Activated CD4-positive, alpha-beta T cell treated with anti-CD3 and anti-CD28 coated beads for 36 hours (primary cell): ENCODE measurements at regions of chrX and their contacts with region 1.

Region 1: GRCh38 chrX:51461053-51462044 is 35.0 kb downstream of the NUDT11 start:
- DNase-seq: peak; percentile 7
- ATAC-seq: no peak
- H3K4me3 Mint-ChIP-seq: no peak overlapping the region
- H3K27ac Mint-ChIP-seq: no peak overlapping the region
- H3K4me1 Mint-ChIP-seq: no peaks in the 10 kb centered on the region
- H3K27me3 Mint-ChIP-seq: no peaks in the 10 kb centered on the region

Region 2: GRCh38 chrX:50691820-50692219 is 769.5 kb before region 1 on chrX:
- CTCF ChIA-PET with region 1: interaction called, 3 read pairs
- POLR2A ChIA-PET with region 1: no interaction called
- intact Hi-C with region 1: loop called in 1 of 2 experiments (anchors 10 kb)
- DNase-seq: peak; percentile 4
- ATAC-seq: peak; percentile 60
- H3K4me3 Mint-ChIP-seq: no peak overlapping the region
- H3K27ac Mint-ChIP-seq: no peak overlapping the region
- H3K4me1 Mint-ChIP-seq: no peaks in the 10 kb centered on the region
- H3K27me3 Mint-ChIP-seq: peaks cover 6% of the 10 kb centered on the region

Region 3: GRCh38 chrX:51144852-51145442 is 316.4 kb before region 1 on chrX:
- CTCF ChIA-PET with region 1: interaction called, 9 read pairs
- POLR2A ChIA-PET with region 1: no interaction called
- intact Hi-C with region 1: loop called (anchors 2 to 5 kb)
- DNase-seq: peak; percentile 50
- ATAC-seq: no peak
- H3K4me3 Mint-ChIP-seq: no peak overlapping the region
- H3K27ac Mint-ChIP-seq: no peak overlapping the region
- H3K4me1 Mint-ChIP-seq: no peaks in the 10 kb centered on the region
- H3K27me3 Mint-ChIP-seq: peaks cover 13% of the 10 kb centered on the region

Region 4: DNA sequence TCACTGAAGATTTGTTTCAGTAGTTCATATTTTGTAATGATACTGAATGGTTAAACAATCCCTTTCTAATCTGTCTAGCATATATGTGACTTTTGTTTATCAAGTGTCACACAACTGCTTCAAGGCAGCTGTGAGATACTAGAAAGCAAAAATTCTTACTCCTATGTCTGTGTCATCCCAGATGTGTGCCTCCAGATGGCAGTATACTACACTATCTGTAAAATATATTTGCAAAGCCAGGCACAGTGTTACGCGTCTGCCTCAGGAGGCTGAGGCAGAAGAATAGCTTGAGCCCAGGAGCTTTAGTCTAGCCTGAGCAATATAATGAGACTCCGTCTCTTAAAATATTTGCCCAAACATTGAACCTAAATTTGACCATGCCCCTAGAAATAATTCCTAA is 124.8 kb before region 1 on chrX:
- CTCF ChIA-PET with region 1: interaction called, 46 read pairs
- POLR2A ChIA-PET with region 1: no interaction called
- intact Hi-C with region 1: loop called (anchors 1 to 2 kb)
- DNase-seq: peak; percentile 39
- ATAC-seq: peak; percentile 58
- H3K4me3 Mint-ChIP-seq: no peak overlapping the region
- H3K27ac Mint-ChIP-seq: no peak overlapping the region
- H3K4me1 Mint-ChIP-seq: peaks cover 1% of the 10 kb centered on the region
- H3K27me3 Mint-ChIP-seq: peaks cover 3% of the 10 kb centered on the region

Region 5: GRCh38 chrX:51420610-51421009 is 40.7 kb before region 1 on chrX:
- CTCF ChIA-PET with region 1: interaction called, 24 read pairs
- POLR2A ChIA-PET with region 1: no interaction called
- intact Hi-C with region 1: no loop called
- DNase-seq: peak; percentile 30
- ATAC-seq: peak; percentile 49
- H3K4me3 Mint-ChIP-seq: no peak overlapping the region
- H3K27ac Mint-ChIP-seq: no peak overlapping the region
- H3K4me1 Mint-ChIP-seq: peaks cover 9% of the 10 kb centered on the region
- H3K27me3 Mint-ChIP-seq: no peaks in the 10 kb centered on the region

Region 6: DNA sequence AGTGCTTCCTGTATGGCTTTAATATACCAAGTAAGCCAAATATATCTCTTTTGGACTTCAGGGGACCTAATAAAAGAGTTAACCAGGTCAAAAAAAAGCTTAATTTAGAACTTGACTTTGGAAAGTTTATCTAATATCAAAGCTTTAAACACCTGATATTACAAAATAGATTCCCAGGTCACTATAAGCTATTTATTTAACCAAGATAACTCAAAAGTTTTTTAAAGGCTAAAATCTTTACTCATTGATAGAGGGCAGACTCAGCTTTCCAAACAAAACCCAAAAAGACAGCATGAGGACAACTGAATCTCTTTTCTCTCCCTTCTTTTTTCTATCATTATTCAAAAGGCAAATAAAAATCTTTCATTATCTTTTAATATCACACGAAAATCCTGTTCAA is 15.6 kb after region 1 on chrX:
- CTCF ChIA-PET with region 1: interaction called, 13 read pairs
- POLR2A ChIA-PET with region 1: no interaction called
- intact Hi-C with region 1: no loop called
- DNase-seq: no peak
- ATAC-seq: no peak
- H3K4me3 Mint-ChIP-seq: no peak overlapping the region
- H3K27ac Mint-ChIP-seq: no peak overlapping the region
- H3K4me1 Mint-ChIP-seq: no peaks in the 10 kb centered on the region
- H3K27me3 Mint-ChIP-seq: no peaks in the 10 kb centered on the region

Region 7: GRCh38 chrX:51955200-51955599 is 493.9 kb after region 1 on chrX:
- CTCF ChIA-PET with region 1: no interaction called
- POLR2A ChIA-PET with region 1: no interaction called
- intact Hi-C with region 1: no loop called
- DNase-seq: peak; percentile 5
- ATAC-seq: peak; percentile 76
- H3K4me3 Mint-ChIP-seq: no peak overlapping the region
- H3K27ac Mint-ChIP-seq: no peak overlapping the region
- H3K4me1 Mint-ChIP-seq: peaks cover 2% of the 10 kb centered on the region
- H3K27me3 Mint-ChIP-seq: peaks cover 8% of the 10 kb centered on the region